ENCODE measurements at regions of chr14 and their contacts with region 1.

Region 1: GRCh38 chr14:77023001-77023996 is 5.2 kb downstream of the IRF2BPL start:
- DNase-seq: peak in 1 of 2 experiments; percentile 75
- ATAC-seq: peak in 1 of 2 experiments; percentile 50; a peak in 3 of 6 replicates
- H3K4me3 ChIP-seq: peak overlapping the region; percentile 78; the same call in 2 of the 3 replicates
- H3K27ac ChIP-seq: peak overlapping the region; percentile 95 to 99
- H3K4me1 ChIP-seq: peaks cover 31% of the 10 kb centered on the region
- CTCF ChIP-seq: no peak
- EP300 ChIP-seq: no peak; a peak in 1 of 5 replicates
- POLR2A ChIP-seq: no peak
- RAD21 ChIP-seq: peak; percentile 28 to 31; a peak in 2 of 5 replicates

Region 2: GRCh38 chr14:76848890-76849289 is 174.4 kb before region 1 on chr14:
- CTCF ChIA-PET with region 1: no interaction called
- POLR2A ChIA-PET with region 1: no interaction called
- DNase-seq: peak; percentile 44 to 69
- ATAC-seq: peak; percentile 79 to 85; a peak in 5 of 6 replicates
- H3K4me3 ChIP-seq: no peak overlapping the region
- H3K27ac ChIP-seq: no peak overlapping the region
- H3K4me1 ChIP-seq: no peaks in the 10 kb centered on the region
- CTCF ChIP-seq: no peak
- EP300 ChIP-seq: no peak
- POLR2A ChIP-seq: no peak
- RAD21 ChIP-seq: no peak

Region 3: GRCh38 chr14:76947078-76947837 is 76.0 kb before region 1 on chr14:
- CTCF ChIA-PET with region 1: interaction called, 12 read pairs
- POLR2A ChIA-PET with region 1: interaction called, 28 read pairs
- DNase-seq: peak; percentile 90 to 95
- ATAC-seq: peak; percentile 88 to 89
- H3K4me3 ChIP-seq: no peak overlapping the region
- H3K27ac ChIP-seq: peak overlapping the region; percentile 96 to 100
- H3K4me1 ChIP-seq: peaks cover 71% of the 10 kb centered on the region
- CTCF ChIP-seq: peak; percentile 56; the same call in 2 of the 3 replicates
- EP300 ChIP-seq: peak in 1 of 2 experiments; percentile 59; a peak in 1 of 5 replicates
- POLR2A ChIP-seq: no peak
- RAD21 ChIP-seq: peak; percentile 61 to 82

Region 4: DNA sequence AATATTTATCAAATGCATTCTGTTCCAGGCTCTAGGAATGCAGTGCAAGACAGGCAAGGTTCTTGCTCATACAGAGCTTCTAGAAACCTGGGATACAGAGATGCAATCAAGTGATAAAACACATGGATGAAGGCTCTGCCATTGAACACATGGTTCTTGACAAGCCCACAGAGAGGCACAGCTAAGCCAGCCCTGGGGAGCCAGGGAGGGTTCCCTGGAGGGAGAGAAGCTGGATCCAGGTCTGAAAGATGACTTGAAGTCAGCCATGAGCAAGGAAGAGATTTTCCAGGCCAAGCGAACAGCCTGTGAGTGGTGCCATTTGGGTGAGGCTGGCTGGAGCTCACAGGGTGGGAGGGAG is 61.0 kb before region 1 on chr14:
- CTCF ChIA-PET with region 1: interaction called, 16 read pairs
- POLR2A ChIA-PET with region 1: interaction called, 32 read pairs
- DNase-seq: no peak
- ATAC-seq: peak; percentile 21 to 25; a peak in 5 of 6 replicates
- H3K4me3 ChIP-seq: peak overlapping the region; percentile 30
- H3K27ac ChIP-seq: peak overlapping the region; percentile 96 to 100
- H3K4me1 ChIP-seq: peaks cover 52% of the 10 kb centered on the region
- CTCF ChIP-seq: no peak
- EP300 ChIP-seq: no peak
- POLR2A ChIP-seq: no peak
- RAD21 ChIP-seq: no peak

Region 5: GRCh38 chr14:77033622-77034521 is 10.6 kb after region 1 on chr14:
- CTCF ChIA-PET with region 1: interaction called, 16 read pairs
- POLR2A ChIA-PET with region 1: interaction called, 54 read pairs
- DNase-seq: peak; percentile 92 to 94
- ATAC-seq: peak; percentile 77 to 79
- H3K4me3 ChIP-seq: peak overlapping the region; percentile 49
- H3K27ac ChIP-seq: peak overlapping the region; percentile 95 to 99
- H3K4me1 ChIP-seq: peaks cover 78% of the 10 kb centered on the region
- CTCF ChIP-seq: no peak
- EP300 ChIP-seq: peak; percentile 66 to 75; a peak in 2 of 5 replicates
- POLR2A ChIP-seq: peak; percentile 38
- RAD21 ChIP-seq: peak; percentile 23 to 28; a peak in 2 of 5 replicates

Region 6: GRCh38 chr14:77040059-77040740 is 16.9 kb after region 1 on chr14:
- CTCF ChIA-PET with region 1: interaction called, 16 read pairs
- POLR2A ChIA-PET with region 1: interaction called, 54 read pairs
- DNase-seq: peak; percentile 88 to 99
- ATAC-seq: peak; percentile 86 to 88
- H3K4me3 ChIP-seq: peak overlapping the region; percentile 36
- H3K27ac ChIP-seq: peak overlapping the region; percentile 90 to 99
- H3K4me1 ChIP-seq: peaks cover 86% of the 10 kb centered on the region
- CTCF ChIP-seq: no peak
- EP300 ChIP-seq: peak; percentile 18 to 68; a peak in 2 of 5 replicates
- POLR2A ChIP-seq: no peak
- RAD21 ChIP-seq: peak; percentile 8 to 31; a peak in 2 of 5 replicates

Region 7: GRCh38 chr14:77053046-77053841 is 29.9 kb after region 1 on chr14:
- CTCF ChIA-PET with region 1: interaction called, 481 read pairs
- POLR2A ChIA-PET with region 1: no interaction called
- DNase-seq: peak in 1 of 2 experiments; percentile 65
- ATAC-seq: peak; percentile 28 to 88; a peak in 3 of 6 replicates
- H3K4me3 ChIP-seq: no peak overlapping the region
- H3K27ac ChIP-seq: peak overlapping the region; percentile 66 to 81
- H3K4me1 ChIP-seq: peaks cover 19% of the 10 kb centered on the region
- CTCF ChIP-seq: peak; percentile 67
- EP300 ChIP-seq: no peak
- POLR2A ChIP-seq: no peak
- RAD21 ChIP-seq: peak; percentile 83 to 86

Region 8: DNA sequence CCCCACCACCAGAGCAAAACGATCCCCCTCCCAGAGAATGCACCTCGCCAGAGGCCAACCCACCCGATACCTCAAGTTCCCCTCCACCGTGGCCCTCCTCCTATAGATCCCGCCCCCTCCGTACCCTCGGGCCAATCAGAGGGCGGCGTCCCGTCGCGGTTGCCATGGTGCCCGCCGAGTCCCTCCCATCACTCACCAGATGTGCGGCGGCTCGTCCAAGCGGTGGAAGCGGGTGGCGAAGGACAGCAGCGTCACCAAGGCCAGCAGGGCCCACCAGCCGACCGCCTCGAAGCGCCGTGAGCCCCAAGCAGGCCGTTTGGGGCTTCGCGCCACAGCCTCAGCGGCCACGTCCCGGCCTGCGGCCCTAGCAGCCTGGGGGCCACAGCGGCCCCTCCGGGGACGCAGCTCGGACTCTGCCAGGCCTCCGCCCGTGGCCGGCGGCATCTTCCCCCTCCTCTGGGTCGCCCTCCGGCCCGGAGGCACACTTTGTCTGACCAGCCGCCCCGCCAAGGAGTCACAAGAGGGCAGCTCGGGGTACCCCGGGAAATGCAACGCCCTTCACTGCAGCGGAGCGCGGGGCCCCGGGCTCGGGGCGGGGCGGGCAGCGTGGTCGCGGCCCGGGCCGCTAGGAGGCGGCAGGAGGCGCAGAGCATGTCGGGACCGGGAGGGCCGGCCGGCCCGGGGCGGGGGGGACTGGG is 297.1 kb after region 1 on chr14 and contains the start of gene POMT2:
- CTCF ChIA-PET with region 1: no interaction called
- POLR2A ChIA-PET with region 1: no interaction called
- DNase-seq: peak; percentile 91 to 93
- ATAC-seq: peak; percentile 81 to 83
- H3K4me3 ChIP-seq: peak within 1 kb of the TSS; percentile 99
- H3K27ac ChIP-seq: peak within 1 kb of the TSS; percentile 99
- H3K4me1 ChIP-seq: peaks cover 34% of the 10 kb centered on the region
- CTCF ChIP-seq: peak; percentile 30; the same call in 2 of the 3 replicates
- EP300 ChIP-seq: no peak
- POLR2A ChIP-seq: peak; percentile 68
- RAD21 ChIP-seq: no peak
- polyA plus RNA-seq, gene POMT2: 35.0 and 38.7 TPM in 2 replicates

Region 9: DNA sequence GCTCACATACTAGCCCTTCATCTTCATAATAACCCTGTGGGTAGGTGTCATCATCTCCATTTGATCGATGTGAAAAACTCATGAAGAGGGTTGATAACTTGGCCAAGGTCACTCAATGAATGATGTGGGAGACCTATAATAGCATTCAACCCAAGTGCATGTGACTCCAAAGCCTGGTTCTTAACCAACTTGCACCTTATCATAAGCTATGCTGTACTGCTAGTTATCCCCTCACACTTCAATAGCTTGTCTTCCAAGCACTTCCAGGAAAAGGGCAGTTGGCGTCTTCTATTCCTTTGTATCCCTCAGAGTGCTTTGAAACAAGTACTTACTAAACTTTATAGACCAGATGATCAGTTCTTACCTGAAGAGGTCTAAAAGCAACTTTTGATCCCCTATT is 418.9 kb after region 1 on chr14:
- CTCF ChIA-PET with region 1: no interaction called
- POLR2A ChIA-PET with region 1: no interaction called
- DNase-seq: no peak
- ATAC-seq: no peak
- H3K4me3 ChIP-seq: no peak overlapping the region
- H3K27ac ChIP-seq: no peak overlapping the region
- H3K4me1 ChIP-seq: no peaks in the 10 kb centered on the region
- CTCF ChIP-seq: no peak
- EP300 ChIP-seq: no peak
- POLR2A ChIP-seq: no peak
- RAD21 ChIP-seq: no peak

Measured in A549 (cell line).